Transverse colon (tissue), 4 donors: ENCODE measurements at regions of chr13 and their contacts with region 1.

Region 1: DNA sequence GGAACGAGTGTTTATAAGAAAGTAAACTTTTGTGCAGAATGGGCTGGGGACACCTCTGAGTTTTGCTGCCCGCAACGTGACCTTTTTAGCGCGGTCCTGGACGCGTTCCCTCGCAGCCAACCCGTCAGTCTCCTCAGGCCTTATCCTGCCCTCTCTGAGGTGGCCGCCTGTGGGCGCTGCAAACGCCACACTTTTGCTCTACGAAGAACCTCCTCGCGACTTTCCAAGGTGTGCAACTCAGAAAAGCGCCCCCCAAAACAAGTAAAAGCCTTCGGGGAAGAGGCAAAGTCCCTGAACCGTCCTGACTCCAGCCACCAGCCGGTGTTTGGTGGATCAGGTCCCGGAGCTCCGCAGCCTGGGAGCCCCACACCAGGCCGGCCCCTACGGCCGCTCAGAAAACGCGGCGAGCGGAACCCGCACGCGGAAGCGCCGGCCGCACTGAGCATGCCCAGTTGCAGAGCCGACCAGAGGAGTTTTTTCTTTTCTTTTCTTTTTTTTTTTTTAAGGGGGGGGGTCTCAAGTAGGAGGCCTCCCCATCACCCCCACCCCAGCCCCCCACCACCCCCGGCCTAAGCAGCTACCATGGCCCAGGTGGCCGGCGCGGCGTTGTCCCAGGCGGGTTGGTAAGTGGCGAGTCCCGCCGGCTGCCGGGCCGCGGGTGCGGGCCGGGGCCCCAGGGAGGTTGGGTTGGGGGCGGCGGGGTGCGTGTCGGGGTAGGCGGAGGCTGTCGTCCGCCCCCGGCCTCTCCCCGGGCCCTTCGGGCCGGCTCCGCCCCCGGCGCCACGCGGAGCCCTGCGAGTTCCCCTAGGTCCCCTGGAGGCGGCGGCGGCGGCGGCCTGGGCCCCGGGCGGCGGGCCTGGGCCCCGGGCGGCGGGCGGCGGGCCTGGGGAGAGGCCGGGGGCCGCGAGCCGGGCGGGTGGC is at the start of gene TDRD3:
- DNase-seq: peak; percentile 86
- H3K4me3 ChIP-seq: peak within 1 kb of the TSS; percentile 73 to 95 (median 75)
- H3K27ac ChIP-seq: peak within 1 kb of the TSS; percentile 99 to 100 (median 99)
- H3K4me1 ChIP-seq: peaks cover 3 to 40% (median 22%) of the 10 kb centered on the region in 4 donors
- H3K27me3 ChIP-seq: no peaks in the 10 kb centered on the region
- CTCF ChIP-seq: peak; percentile 61 to 95 (median 77)
- EP300 ChIP-seq: no peak
- POLR2A ChIP-seq: peak; percentile 67
- total RNA-seq, gene TDRD3: 20.9 to 73.4 (median 33.9) TPM

Region 2: DNA sequence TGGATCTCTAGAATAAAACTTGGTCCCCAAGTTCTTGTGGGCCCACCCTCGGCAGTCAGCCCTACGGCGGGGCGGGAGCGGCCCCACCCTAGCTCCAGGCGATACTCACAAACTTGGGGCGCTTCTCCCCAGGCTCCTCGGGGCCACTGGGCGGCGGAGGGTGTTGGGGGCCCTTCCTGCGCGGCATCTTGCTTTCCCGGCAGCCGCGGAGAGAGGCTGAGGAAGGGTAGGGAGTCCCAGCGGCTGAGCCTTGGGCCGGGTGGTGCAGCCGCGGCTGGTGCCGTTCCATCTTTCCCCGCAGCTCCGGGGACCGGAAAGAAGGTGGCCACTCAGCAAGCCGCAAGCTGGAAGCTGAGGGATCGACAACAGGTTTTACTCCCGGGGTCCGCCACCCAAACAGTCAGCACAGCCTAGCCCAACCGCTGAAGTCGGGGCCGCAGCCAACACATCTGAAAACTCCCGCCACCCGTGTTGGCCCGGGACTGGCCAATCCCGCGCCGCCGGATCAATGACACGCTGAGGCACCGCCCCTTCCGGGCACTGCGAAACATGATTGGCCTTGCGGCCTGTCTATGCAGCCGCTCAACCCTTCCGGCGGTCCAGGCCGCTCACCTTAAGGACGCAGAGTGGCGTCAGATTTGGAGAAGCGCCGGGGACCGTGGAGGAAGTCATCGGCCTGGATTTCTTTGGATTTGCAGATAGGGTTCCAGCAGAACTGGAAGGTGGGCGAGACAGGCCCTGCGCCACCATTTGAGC is 233.4 kb before region 1 on chr13 and contains the start of gene DIAPH3:
- in situ Hi-C with region 1: loop called in 1 of 4 experiments (anchors 25 kb)
- intact Hi-C with region 1: no loop called
- DNase-seq: peak; percentile 97
- H3K4me3 ChIP-seq: peak within 1 kb of the TSS; percentile 58 to 71 (median 58)
- H3K27ac ChIP-seq: peak within 1 kb of the TSS; percentile 91 to 93 (median 93)
- H3K4me1 ChIP-seq: peaks cover 0 to 18% (median 12%) of the 10 kb centered on the region in 4 donors
- H3K27me3 ChIP-seq: no peaks in the 10 kb centered on the region
- CTCF ChIP-seq: peak in 1 of 5 experiments; percentile 5
- EP300 ChIP-seq: no peak
- POLR2A ChIP-seq: peak; percentile 90
- total RNA-seq, gene DIAPH3: 0.95 to 1.6 (median 1.2) TPM

Region 3: GRCh38 chr13:60562081-60562780 is 165.2 kb after region 1 on chr13:
- in situ Hi-C with region 1: no loop called
- intact Hi-C with region 1: no loop called
- DNase-seq: no peak
- H3K4me3 ChIP-seq: no peak overlapping the region
- H3K27ac ChIP-seq: no peak overlapping the region
- H3K4me1 ChIP-seq: no peaks in the 10 kb centered on the region
- H3K27me3 ChIP-seq: no peaks in the 10 kb centered on the region
- CTCF ChIP-seq: no peak
- EP300 ChIP-seq: no peak
- POLR2A ChIP-seq: no peak

Region 4: GRCh38 chr13:60617991-60618733 is 221.1 kb after region 1 on chr13:
- in situ Hi-C with region 1: no loop called
- intact Hi-C with region 1: no loop called
- DNase-seq: no peak
- H3K4me3 ChIP-seq: no peak overlapping the region
- H3K27ac ChIP-seq: no peak overlapping the region
- H3K4me1 ChIP-seq: no peaks in the 10 kb centered on the region
- H3K27me3 ChIP-seq: peaks cover 5% of the 10 kb centered on the region
- CTCF ChIP-seq: peak in 2 of 5 experiments; percentile 24 to 35
- EP300 ChIP-seq: no peak
- POLR2A ChIP-seq: no peak